ENCODE measurements at regions of chr7 and their contacts with region 1.

Region 1: GRCh38 chr7:24572997-24573625 is at the start of gene PALS2:
- DNase-seq: peak; percentile 74
- ATAC-seq: peak; percentile 61
- H3K4me3 Mint-ChIP-seq: peak within 1 kb of the TSS; percentile 99
- H3K27ac Mint-ChIP-seq: peak within 1 kb of the TSS; percentile 92
- H3K4me1 Mint-ChIP-seq: peaks cover 34% of the 10 kb centered on the region
- H3K27me3 Mint-ChIP-seq: peaks cover 4% of the 10 kb centered on the region
- CTCF ChIP-seq: no peak
- total RNA-seq, gene PALS2: 32.6 to 40.4 TPM

Region 2: GRCh38 chr7:24401628-24402593 is 171.2 kb before region 1 on chr7:
- CTCF ChIA-PET with region 1: no interaction called
- POLR2A ChIA-PET with region 1: no interaction called
- intact Hi-C with region 1: loop called (anchors 10 kb)
- DNase-seq: no peak
- ATAC-seq: no peak
- H3K4me3 Mint-ChIP-seq: no peak overlapping the region
- H3K27ac Mint-ChIP-seq: no peak overlapping the region
- H3K4me1 Mint-ChIP-seq: peaks cover 7% of the 10 kb centered on the region
- H3K27me3 Mint-ChIP-seq: peaks cover 3% of the 10 kb centered on the region
- CTCF ChIP-seq: peak; percentile 20

Region 3: DNA sequence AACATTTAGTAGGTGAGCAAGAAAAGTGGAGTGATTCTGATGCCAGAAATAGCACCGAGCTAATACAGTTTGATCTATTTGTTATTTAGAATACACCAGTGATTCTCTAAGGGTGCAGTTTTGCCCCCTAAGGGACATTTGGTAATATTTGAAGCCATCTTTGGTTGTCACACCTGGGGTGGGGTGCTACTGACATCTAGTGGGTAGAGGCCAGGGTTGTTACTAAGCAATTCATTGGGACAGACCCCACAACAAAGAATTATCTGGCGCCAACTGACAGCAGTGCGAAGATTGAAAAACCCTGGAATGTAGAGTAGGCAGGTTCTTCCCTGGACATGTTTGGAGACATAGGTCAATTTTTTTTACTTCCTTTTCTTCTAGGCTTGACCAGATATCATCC is 14.7 kb after region 1 on chr7:
- CTCF ChIA-PET with region 1: interaction called, 12 read pairs
- POLR2A ChIA-PET with region 1: no interaction called
- intact Hi-C with region 1: no loop called
- DNase-seq: peak; percentile 67
- ATAC-seq: peak; percentile 87
- H3K4me3 Mint-ChIP-seq: no peak overlapping the region
- H3K27ac Mint-ChIP-seq: no peak overlapping the region
- H3K4me1 Mint-ChIP-seq: peaks cover 27% of the 10 kb centered on the region
- H3K27me3 Mint-ChIP-seq: no peaks in the 10 kb centered on the region
- CTCF ChIP-seq: peak; percentile 71

Region 4: DNA sequence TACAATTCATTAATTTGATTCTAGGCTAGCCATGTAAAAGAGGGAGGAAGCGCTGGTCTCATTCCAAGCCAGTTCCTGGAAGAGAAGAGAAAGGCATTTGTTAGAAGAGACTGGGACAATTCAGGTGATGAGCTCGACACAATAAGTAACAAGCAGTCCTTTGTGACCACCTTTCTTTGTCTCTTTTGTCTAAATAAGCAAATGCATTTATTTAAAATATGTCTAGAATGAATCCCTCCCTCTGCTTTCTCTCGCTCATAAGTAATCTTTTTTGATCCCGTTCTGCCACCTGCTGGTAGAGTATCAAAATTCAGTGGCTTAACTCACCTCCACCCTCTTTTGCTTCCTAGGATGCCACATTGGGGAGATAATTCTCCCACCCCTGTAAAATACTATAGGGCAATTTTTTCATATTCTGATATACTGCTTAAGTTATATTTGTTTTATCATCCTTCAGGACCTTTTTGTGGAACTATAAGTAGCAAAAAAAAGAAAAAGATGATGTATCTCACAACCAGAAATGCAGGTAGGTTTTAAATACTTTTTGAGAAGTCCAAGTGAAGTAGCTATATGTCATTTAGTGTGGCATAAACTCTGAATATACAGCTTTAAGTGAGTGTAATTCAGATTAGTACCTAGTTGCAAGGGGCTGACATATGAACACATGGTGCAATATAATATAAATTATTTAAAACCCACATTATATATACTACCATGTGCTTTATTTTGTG is 92.6 kb after region 1 on chr7:
- CTCF ChIA-PET with region 1: interaction called, 53 read pairs
- POLR2A ChIA-PET with region 1: no interaction called
- intact Hi-C with region 1: no loop called
- DNase-seq: peak; percentile 61
- ATAC-seq: peak; percentile 56
- H3K4me3 Mint-ChIP-seq: no peak overlapping the region
- H3K27ac Mint-ChIP-seq: no peak overlapping the region
- H3K4me1 Mint-ChIP-seq: peaks cover 4% of the 10 kb centered on the region
- H3K27me3 Mint-ChIP-seq: no peaks in the 10 kb centered on the region
- CTCF ChIP-seq: peak; percentile 82

Region 5: DNA sequence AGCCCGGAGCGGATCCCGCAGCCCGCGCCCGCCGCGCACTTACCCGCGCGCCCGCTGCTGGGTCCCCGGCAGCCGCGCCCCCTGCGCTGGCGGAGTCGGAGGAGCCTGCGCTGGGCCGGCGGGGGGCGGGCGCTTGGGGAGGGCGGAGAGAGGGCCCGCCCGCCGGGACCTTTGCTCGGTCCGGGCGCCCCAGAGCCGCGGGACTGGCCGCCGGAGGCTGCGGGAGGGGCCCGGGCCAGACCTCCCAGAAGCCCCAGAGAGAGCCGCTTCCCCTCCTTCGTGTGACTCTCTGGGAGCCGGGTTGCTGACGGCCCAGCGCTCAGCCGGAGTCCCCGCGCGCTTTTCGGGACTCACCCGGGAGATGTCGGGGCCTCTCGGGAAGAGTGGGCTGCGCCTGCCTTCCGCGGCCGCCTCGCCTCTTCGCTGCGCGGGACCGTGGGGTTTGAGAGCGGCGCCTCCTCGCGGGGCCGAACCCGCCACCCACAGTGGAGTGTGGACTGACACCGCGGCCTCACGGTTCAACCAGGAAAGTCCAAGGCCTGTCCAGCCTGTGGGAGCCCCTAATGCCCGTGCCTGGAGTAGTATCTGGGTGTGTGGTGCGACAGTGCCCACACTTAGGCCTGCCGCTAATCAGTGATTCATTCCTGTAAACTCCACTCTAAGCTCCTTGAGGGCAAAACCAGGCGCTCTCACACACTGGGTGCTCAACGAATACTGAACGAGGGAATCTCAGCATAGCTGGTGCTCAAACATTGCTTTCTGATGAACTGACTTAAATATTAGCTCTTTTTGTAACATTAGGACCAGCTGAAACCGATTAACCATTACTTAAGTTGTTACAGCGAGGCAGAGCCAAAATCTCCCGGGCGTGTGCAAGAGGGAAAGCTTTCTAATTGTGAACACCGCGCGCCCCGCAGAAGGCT is 184.5 kb after region 1 on chr7 and contains the start of gene GSDME:
- CTCF ChIA-PET with region 1: no interaction called
- POLR2A ChIA-PET with region 1: no interaction called
- intact Hi-C with region 1: loop called (anchors 10 kb)
- DNase-seq: peak; percentile 45
- ATAC-seq: peak; percentile 61
- H3K4me3 Mint-ChIP-seq: peak within 1 kb of the TSS; percentile 77
- H3K27ac Mint-ChIP-seq: peak within 1 kb of the TSS; percentile 87
- H3K4me1 Mint-ChIP-seq: peaks cover 32% of the 10 kb centered on the region
- H3K27me3 Mint-ChIP-seq: peaks cover 42% of the 10 kb centered on the region
- CTCF ChIP-seq: no peak
- total RNA-seq, gene GSDME: 5.2 to 6.1 TPM

Measured in activated CD8-positive, alpha-beta T cell treated with anti-CD3 and anti-CD28 coated beads for 36 hours (primary cell).